CD4-positive, alpha-beta T cell (primary cell): ENCODE measurements at regions of chr17 and their contacts with region 1.

Region 1: GRCh38 chr17:2847381-2848333 is 51.4 kb downstream of the RAP1GAP2 start:
- DNase-seq: peak in 1 of 14 experiments; percentile 31
- ATAC-seq: no peak
- H3K4me3 ChIP-seq: no peak overlapping the region
- H3K4me3 Mint-ChIP-seq: peak overlapping the region; percentile 30
- H3K27ac ChIP-seq: no peak overlapping the region
- H3K27ac Mint-ChIP-seq: no peak overlapping the region
- H3K4me1 ChIP-seq: peaks cover 20% of the 10 kb centered on the region
- H3K4me1 Mint-ChIP-seq: peaks cover 25% of the 10 kb centered on the region
- H3K27me3 ChIP-seq: peaks cover 0 to 4% of the 10 kb centered on the region in 2 experiments
- H3K27me3 Mint-ChIP-seq: peaks cover 10% of the 10 kb centered on the region
- CTCF ChIP-seq: no peak

Region 2: DNA sequence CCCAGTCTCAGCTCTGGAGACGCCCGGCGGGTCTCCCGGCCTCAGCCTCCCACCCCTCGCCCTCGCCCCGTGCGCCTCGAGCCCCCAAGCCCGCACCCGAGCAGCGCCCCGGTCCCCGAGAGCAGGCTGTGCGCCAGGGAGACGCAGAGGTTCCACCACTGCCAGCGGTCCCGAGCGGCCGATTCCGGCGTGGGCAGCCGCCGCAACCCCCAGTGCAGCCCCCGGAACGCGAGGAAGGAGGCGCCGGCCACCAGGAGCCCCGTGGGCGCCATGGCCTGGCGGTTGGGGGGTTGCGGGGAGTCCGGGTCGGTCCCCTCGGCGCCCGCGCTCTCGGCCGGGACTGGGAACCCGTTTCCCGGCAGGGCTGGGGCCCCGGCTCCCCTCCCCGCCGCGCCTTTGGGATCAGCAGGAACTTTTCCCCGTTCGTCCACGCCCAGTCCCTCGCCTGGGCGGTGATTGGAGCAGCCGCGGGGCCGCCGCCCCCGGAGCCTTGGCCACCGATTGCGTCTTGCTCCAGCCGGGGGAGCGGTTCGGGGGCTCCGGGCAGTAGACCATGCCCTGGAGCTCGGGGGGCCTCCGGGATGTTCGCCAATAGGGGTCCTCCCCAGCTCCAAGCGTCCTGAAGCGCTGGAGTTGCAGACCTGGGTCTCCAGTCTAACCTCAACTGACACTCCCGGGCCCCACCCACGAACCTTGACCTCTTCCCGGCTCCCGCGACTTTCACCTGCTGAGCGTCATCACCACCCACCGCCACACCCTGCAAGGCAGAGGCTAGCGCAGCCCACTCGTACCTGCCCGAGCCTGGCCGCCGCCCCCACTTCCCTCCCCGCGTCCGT is 1137.5 kb before region 1 on chr17 and contains the start of gene TLCD2:
- CTCF ChIA-PET with region 1: no interaction called
- POLR2A ChIA-PET with region 1: no interaction called
- intact Hi-C with region 1: no loop called
- DNase-seq: peak in 3 of 14 experiments; percentile 31 to 39 (median 32)
- ATAC-seq: peak; percentile 15
- H3K4me3 ChIP-seq: peak within 1 kb of the TSS; percentile 61
- H3K4me3 Mint-ChIP-seq: peak within 1 kb of the TSS; percentile 86
- H3K27ac ChIP-seq: no peak within 1 kb of the TSS
- H3K27ac Mint-ChIP-seq: peak within 1 kb of the TSS; percentile 48
- H3K4me1 ChIP-seq: peaks cover 61% of the 10 kb centered on the region
- H3K4me1 Mint-ChIP-seq: peaks cover 28% of the 10 kb centered on the region
- H3K27me3 ChIP-seq: peaks cover 19 to 28% of the 10 kb centered on the region in 2 experiments
- H3K27me3 Mint-ChIP-seq: peaks cover 17% of the 10 kb centered on the region
- CTCF ChIP-seq: no peak
- total RNA-seq, gene TLCD2: 0.19 to 0.34 TPM

Region 3: GRCh38 chr17:2770129-2770528 is 77.5 kb before region 1 on chr17:
- CTCF ChIA-PET with region 1: no interaction called
- POLR2A ChIA-PET with region 1: no interaction called
- intact Hi-C with region 1: no loop called
- DNase-seq: no peak
- ATAC-seq: no peak
- H3K4me3 ChIP-seq: no peak overlapping the region
- H3K4me3 Mint-ChIP-seq: no peak overlapping the region
- H3K27ac ChIP-seq: no peak overlapping the region
- H3K27ac Mint-ChIP-seq: no peak overlapping the region
- H3K4me1 ChIP-seq: peaks cover 3% of the 10 kb centered on the region
- H3K4me1 Mint-ChIP-seq: no peaks in the 10 kb centered on the region
- H3K27me3 ChIP-seq: peaks cover 10 to 12% of the 10 kb centered on the region in 2 experiments
- H3K27me3 Mint-ChIP-seq: peaks cover 31% of the 10 kb centered on the region
- CTCF ChIP-seq: no peak

Region 4: DNA sequence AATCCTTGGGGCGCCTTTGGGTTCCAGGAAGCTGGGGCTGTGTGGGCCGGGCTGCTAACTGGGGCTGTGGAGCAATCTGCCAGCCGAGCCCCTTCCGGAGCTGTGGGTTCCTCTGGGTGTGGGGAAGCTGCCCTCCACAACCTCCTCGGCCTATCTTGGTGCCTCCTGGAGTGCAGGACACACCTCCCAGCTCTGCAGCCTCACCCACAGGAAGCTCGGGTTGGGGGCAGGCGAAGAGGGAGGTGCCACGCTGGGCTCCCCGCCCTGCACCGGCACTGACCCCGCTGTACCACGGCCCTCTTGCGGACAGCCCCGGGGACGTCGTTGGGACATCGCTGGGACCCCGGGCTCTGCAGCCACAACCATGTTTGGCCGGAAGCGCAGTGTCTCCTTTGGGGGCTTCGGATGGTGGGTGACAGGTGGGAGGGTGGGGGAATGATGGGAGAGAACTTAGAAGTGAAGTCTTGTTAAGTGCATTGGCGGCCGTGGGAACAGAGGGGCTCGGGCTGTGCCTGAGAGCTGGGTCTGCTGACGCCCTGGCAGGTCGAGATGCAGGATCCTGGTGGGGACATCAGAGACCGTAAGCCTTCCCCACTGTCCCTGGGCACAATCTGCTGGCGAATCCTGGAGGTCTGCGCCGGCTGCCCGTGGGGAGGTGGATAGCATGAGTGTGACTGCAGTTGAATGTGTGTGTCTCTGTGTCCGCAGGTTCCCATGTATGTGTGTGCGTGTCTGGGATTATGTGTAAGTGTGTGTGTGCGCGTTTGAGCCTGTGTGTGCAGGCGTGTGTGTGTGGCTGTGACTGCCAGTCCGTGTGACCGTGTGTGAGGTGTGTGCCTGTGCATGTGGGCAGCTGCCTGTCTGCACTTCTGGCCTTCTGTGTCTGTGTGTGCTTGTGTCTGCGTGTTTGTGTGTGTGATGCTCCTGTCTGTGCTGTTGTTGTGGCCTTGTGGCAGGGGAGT is 51.2 kb before region 1 on chr17 and contains the start of gene RAP1GAP2:
- CTCF ChIA-PET with region 1: no interaction called
- POLR2A ChIA-PET with region 1: no interaction called
- intact Hi-C with region 1: no loop called
- DNase-seq: peak; percentile 45 to 94 (median 66)
- ATAC-seq: peak; percentile 91
- H3K4me3 ChIP-seq: peak within 1 kb of the TSS; percentile 68
- H3K4me3 Mint-ChIP-seq: peak within 1 kb of the TSS; percentile 92
- H3K27ac ChIP-seq: no peak within 1 kb of the TSS
- H3K27ac Mint-ChIP-seq: peak within 1 kb of the TSS; percentile 80
- H3K4me1 ChIP-seq: peaks cover 79% of the 10 kb centered on the region
- H3K4me1 Mint-ChIP-seq: peaks cover 79% of the 10 kb centered on the region
- H3K27me3 ChIP-seq: no peaks in the 10 kb centered on the region
- H3K27me3 Mint-ChIP-seq: no peaks in the 10 kb centered on the region
- CTCF ChIP-seq: no peak
- total RNA-seq, gene RAP1GAP2: 46.3 to 49.7 TPM

Region 5: GRCh38 chr17:2837147-2837561 is 10.5 kb before region 1 on chr17:
- CTCF ChIA-PET with region 1: interaction called, 16 read pairs
- POLR2A ChIA-PET with region 1: no interaction called
- intact Hi-C with region 1: no loop called
- DNase-seq: peak in 11 of 14 experiments; percentile 14 to 78 (median 43)
- ATAC-seq: peak; percentile 98
- H3K4me3 ChIP-seq: no peak overlapping the region
- H3K4me3 Mint-ChIP-seq: no peak overlapping the region
- H3K27ac ChIP-seq: no peak overlapping the region
- H3K27ac Mint-ChIP-seq: no peak overlapping the region
- H3K4me1 ChIP-seq: peaks cover 7% of the 10 kb centered on the region
- H3K4me1 Mint-ChIP-seq: peaks cover 5% of the 10 kb centered on the region
- H3K27me3 ChIP-seq: no peaks in the 10 kb centered on the region
- H3K27me3 Mint-ChIP-seq: no peaks in the 10 kb centered on the region
- CTCF ChIP-seq: peak; percentile 40

Region 6: DNA sequence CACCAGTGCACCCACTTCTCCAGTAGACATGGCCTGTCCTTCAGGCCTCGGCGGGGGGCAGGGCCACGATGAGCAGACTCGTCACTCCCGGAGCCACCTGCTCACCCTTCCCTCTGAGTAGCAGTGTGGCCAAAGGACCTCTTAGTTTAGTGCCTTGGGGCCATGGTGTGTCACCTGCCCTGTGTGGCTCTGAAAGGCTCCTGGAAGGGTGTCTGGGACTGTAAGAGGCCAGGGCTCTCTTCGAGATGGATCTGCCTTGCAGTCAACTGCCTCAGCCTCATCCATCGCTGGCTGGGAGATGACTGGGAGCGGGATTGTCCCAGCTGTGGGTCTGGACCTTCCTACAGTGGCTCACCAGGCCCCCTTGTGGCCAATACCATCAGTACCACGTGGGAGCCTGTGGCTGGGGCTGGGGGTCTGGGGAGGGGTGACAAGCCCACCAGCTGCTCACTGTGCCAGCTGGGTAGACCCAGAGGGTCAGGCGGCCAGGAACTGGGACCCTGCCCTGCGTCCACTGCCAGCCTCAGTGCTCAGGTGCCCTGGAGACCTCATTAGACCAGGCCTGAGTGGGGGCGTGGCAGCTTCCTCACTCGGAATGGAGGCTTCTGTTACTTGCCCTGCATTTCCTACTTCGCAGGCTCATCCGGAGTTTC is 82.3 kb after region 1 on chr17:
- CTCF ChIA-PET with region 1: interaction called, 3 read pairs
- POLR2A ChIA-PET with region 1: no interaction called
- intact Hi-C with region 1: loop called in 1 of 2 experiments (anchors 5 kb)
- DNase-seq: peak in 6 of 14 experiments; percentile 9 to 49 (median 36)
- ATAC-seq: no peak
- H3K4me3 ChIP-seq: no peak overlapping the region
- H3K4me3 Mint-ChIP-seq: no peak overlapping the region
- H3K27ac ChIP-seq: no peak overlapping the region
- H3K27ac Mint-ChIP-seq: no peak overlapping the region
- H3K4me1 ChIP-seq: peaks cover 20% of the 10 kb centered on the region
- H3K4me1 Mint-ChIP-seq: peaks cover 19% of the 10 kb centered on the region
- H3K27me3 ChIP-seq: no peaks in the 10 kb centered on the region
- H3K27me3 Mint-ChIP-seq: no peaks in the 10 kb centered on the region
- CTCF ChIP-seq: peak; percentile 75

Region 7: GRCh38 chr17:3012926-3013581 is 165.4 kb after region 1 on chr17:
- CTCF ChIA-PET with region 1: interaction called, 14 read pairs
- POLR2A ChIA-PET with region 1: interaction called, 4 read pairs
- intact Hi-C with region 1: loop called (anchors 1 kb)
- DNase-seq: peak; percentile 32 to 69 (median 50)
- ATAC-seq: peak; percentile 87
- H3K4me3 ChIP-seq: no peak overlapping the region
- H3K4me3 Mint-ChIP-seq: no peak overlapping the region
- H3K27ac ChIP-seq: no peak overlapping the region
- H3K27ac Mint-ChIP-seq: no peak overlapping the region
- H3K4me1 ChIP-seq: no peaks in the 10 kb centered on the region
- H3K4me1 Mint-ChIP-seq: no peaks in the 10 kb centered on the region
- H3K27me3 ChIP-seq: no peaks in the 10 kb centered on the region
- H3K27me3 Mint-ChIP-seq: no peaks in the 10 kb centered on the region
- CTCF ChIP-seq: peak; percentile 69